ENCODE measurements at regions of chr1 and their contacts with region 1.

Region 1: GRCh38 chr1:157156058-157156541 is 17.9 kb upstream of the ETV3 start:
- H3K4me3 ChIP-seq: peak overlapping the region; percentile 29
- H3K27ac ChIP-seq: no peak overlapping the region
- H3K4me1 ChIP-seq: no peaks in the 10 kb centered on the region; the same call in 1 of the 2 replicates
- CTCF ChIP-seq: peak; percentile 97

Region 2: GRCh38 chr1:157081707-157082106 is 74.4 kb before region 1 on chr1:
- CTCF ChIA-PET with region 1: interaction called, 288 read pairs
- POLR2A ChIA-PET with region 1: no interaction called
- H3K4me3 ChIP-seq: no peak overlapping the region
- H3K27ac ChIP-seq: no peak overlapping the region
- H3K4me1 ChIP-seq: no peaks in the 10 kb centered on the region
- CTCF ChIP-seq: no peak

Region 3: DNA sequence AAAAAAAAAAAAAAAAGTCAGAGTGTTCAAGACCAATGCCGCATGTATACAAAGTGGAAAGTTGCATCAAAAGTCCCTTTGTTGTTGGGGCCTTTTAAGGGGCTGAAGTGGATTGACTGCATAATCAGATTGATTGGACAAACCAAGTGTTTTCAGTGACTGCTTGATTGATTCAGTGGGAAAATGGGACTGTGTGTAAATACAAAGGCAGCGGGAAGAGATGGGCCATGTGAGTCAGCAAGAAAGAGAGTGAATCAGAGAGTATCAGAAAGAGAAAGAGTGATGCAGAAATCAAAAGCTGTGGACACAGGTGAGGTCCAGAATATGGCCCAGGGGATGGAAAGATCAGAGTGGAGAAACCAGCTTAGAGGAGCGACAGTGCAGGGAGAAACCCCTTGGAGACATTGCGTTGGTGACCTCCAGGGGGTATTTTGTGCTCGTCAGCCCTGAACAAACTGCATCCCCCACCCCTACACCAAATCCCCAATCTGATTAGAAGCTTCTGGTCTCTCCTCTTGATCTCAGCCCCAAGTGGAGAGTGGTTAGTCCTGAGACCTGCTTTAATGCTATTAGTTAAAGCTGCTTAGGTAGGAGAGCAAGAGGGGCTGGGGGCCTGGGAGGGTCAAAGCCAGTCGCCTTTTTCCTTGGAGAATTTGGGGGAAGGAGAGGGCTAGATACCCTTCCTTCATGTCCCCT is 51.4 kb before region 1 on chr1:
- CTCF ChIA-PET with region 1: interaction called, 13 read pairs
- POLR2A ChIA-PET with region 1: no interaction called
- H3K4me3 ChIP-seq: no peak overlapping the region
- H3K27ac ChIP-seq: no peak overlapping the region
- H3K4me1 ChIP-seq: no peaks in the 10 kb centered on the region
- CTCF ChIP-seq: no peak

Region 4: DNA sequence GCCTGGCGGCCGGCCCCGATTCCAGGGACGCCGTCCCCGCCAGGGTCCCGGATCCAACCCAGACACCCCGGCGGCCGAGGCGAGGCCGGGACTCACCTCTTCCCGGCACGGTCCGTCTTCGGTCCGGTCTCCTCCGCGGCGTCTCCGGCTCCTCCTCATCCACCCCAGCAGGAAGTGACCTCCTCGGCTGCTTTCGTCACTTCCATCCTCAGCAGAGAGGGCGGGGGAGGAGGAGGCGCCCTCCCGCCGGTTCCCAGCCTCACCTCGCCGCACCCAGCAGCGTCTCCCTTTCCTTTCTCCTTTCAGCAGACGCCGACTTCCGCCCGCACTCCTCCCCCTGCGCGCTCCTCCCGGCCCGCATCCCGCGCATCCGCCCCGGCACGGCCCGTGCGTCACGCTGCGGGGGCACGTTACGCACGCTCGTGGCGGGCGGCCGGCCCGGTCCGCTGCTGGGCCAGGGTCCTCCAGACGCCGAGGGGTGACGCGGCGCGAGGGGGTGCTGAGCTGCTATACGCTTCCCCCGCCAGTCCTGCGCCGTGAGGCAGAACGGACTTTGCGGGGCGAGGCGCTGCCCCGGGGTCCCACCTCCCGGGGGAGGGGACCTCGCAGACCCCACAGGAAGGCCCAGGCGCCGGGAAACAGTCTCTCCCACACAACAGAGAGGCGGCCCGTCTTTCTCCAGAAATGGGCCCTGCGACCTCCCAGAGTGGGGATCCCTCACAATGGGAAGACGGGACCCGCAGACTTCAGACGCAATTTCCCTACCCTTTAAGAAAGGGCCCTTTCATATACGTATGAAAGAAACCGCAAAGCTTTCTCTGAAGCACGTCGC is 17.7 kb before region 1 on chr1 and contains the start of gene ETV3:
- CTCF ChIA-PET with region 1: interaction called, 50 read pairs
- POLR2A ChIA-PET with region 1: interaction called, 3 read pairs
- H3K4me3 ChIP-seq: peak within 1 kb of the TSS; percentile 71
- H3K27ac ChIP-seq: peak within 1 kb of the TSS; percentile 89
- H3K4me1 ChIP-seq: peaks cover 6% of the 10 kb centered on the region
- CTCF ChIP-seq: no peak

Region 5: GRCh38 chr1:157170677-157171515 is 14.8 kb after region 1 on chr1:
- CTCF ChIA-PET with region 1: interaction called, 19 read pairs
- POLR2A ChIA-PET with region 1: no interaction called
- H3K4me3 ChIP-seq: no peak overlapping the region
- H3K27ac ChIP-seq: no peak overlapping the region
- H3K4me1 ChIP-seq: no peaks in the 10 kb centered on the region
- CTCF ChIP-seq: no peak; the same call in 1 of the 2 replicates

Measured in HEK293 (cell line).